ENCODE measurements at regions of chr7 and their contacts with region 1.

Region 1: DNA sequence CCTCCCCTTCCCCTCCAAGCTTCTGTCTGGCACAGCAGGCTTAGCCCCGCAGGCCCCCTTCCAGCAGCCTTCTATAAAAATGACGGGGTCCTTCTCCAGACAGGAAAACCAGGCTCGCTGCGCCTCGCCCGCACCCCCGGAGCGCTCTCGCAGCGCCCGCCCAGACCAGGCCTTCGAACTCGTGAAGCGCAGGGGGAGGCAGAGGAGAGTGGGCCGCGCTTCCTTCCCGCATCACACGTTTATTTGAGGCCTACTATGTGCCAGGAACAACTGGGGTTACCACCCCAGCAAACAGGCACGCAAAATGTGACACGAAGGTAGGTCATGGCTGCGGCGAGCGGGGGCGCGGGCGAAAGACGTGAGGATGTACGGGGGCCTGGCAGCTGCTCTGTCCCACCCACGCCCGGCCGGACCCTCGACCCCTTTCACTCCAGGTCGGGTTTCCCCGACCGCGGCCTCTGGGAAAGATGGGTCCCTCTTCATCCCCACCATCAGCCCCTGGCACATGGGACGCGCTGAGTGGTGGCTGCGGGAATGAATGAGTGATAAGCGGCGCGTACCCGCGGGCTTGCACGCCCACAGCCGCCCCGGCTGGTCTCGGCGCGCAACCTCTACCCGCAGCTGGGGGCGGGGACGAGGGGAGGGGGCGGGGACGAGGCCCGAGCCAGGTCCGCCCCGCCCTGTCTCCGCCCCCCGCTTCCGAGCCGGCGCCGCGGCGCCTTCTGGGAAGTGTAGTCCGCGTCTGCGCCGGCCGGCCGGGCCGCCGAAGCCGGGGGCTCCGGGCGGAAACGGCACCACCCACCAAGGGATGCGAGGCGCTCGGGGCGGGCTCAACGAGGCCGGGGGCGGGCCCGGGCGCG is 59.1 kb downstream of the ZNF467 start:
- DNase-seq: peak; percentile 85
- H3K4me3 Mint-ChIP-seq: peak overlapping the region; percentile 93
- H3K27ac Mint-ChIP-seq: no peak overlapping the region
- H3K4me1 Mint-ChIP-seq: peaks cover 24% of the 10 kb centered on the region
- H3K27me3 Mint-ChIP-seq: no peaks in the 10 kb centered on the region
- CTCF ChIP-seq: no peak

Region 2: DNA sequence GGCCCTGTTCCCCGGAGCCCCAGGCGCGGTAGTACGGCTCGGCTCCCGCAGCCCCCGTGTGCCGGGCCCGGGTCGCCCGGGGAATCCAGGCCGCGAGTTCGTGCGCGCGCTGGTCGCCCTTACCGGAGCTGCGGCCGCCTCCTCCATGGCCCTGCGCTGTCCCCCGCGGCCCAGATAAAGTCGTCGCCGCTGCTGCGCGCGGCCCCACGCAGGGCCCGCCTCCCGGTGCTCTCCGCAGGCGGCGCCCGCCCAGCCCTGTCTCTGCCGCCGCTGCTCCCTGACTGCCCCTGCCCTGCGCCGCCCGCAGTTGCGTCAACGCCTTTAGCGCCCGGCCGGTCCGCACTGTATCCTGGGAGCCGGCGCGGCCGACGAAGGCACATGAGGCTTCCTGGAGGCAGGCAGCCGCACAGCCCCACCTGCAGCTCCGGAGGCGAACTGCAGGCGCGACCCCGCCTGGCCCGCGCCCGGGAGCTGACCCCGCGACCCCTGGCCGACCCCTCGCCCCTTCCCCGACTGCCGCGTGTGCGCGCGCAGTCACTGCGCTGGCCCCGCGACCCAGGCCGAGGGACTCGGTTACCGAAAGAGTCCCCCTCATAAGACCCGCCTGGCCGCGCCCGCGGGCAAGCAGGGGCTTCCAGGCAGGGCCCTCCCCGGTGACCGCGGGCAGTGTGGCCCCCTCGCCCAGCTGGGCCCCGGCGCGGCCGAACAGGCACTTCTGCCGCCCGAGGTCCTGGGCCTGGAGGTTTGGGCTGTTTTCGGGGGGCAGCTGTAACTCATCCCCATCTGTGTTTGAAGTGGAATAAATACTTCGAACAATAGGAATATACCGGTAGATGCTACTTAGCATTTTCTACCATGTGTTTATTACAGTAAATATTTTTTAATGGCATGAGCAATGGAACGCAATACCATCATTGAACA is 89.6 kb before region 1 on chr7:
- CTCF ChIA-PET with region 1: interaction called, 11 read pairs
- POLR2A ChIA-PET with region 1: interaction called, 6 read pairs
- intact Hi-C with region 1: no loop called
- DNase-seq: peak; percentile 92
- H3K4me3 Mint-ChIP-seq: peak overlapping the region; percentile 94
- H3K27ac Mint-ChIP-seq: peak overlapping the region; percentile 78
- H3K4me1 Mint-ChIP-seq: peaks cover 21% of the 10 kb centered on the region
- H3K27me3 Mint-ChIP-seq: peaks cover 24% of the 10 kb centered on the region
- CTCF ChIP-seq: peak; percentile 92

Region 3: DNA sequence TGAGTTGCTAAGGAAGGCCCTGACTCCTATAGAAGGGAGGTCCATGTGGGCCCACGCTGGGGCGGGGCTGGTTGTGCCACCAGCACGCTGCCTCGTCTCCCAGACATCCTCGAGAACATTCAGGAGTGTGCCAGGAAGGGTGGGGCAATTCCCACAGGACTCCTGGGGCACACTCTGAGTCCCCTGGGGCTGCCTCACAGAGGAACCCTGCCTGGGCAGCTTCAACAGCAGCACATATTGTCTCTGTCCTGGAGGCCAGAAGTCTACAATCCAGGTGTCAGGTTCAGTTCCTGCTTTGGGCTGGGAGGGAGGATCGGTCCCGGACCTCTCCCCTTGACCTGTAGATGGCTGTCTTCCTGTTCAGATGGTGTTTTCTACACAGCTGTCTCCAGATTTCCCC is 20.3 kb after region 1 on chr7:
- CTCF ChIA-PET with region 1: no interaction called
- POLR2A ChIA-PET with region 1: no interaction called
- intact Hi-C with region 1: no loop called
- DNase-seq: peak; percentile 37
- H3K4me3 Mint-ChIP-seq: no peak overlapping the region
- H3K27ac Mint-ChIP-seq: peak overlapping the region; percentile 55
- H3K4me1 Mint-ChIP-seq: peaks cover 11% of the 10 kb centered on the region
- H3K27me3 Mint-ChIP-seq: no peaks in the 10 kb centered on the region
- CTCF ChIP-seq: no peak

Measured in MCF 10A (cell line).